Esophagus muscularis mucosa (tissue), 4 donors: ENCODE measurements at regions of chr22 and their contacts with region 1.

Region 1: GRCh38 chr22:37566903-37567820 is 6.9 kb downstream of the CDC42EP1 start:
- DNase-seq: peak; percentile 96
- H3K4me3 ChIP-seq: no peak overlapping the region
- H3K27ac ChIP-seq: peak overlapping the region; percentile 15 to 64 (median 53)
- H3K4me1 ChIP-seq: peaks cover 57 to 81% (median 69%) of the 10 kb centered on the region in 4 donors
- H3K27me3 ChIP-seq: peaks cover 0 to 23% (median 0%) of the 10 kb centered on the region in 4 donors
- CTCF ChIP-seq: peak; percentile 91 to 98 (median 94)
- EP300 ChIP-seq: no peak
- POLR2A ChIP-seq: no peak

Region 2: DNA sequence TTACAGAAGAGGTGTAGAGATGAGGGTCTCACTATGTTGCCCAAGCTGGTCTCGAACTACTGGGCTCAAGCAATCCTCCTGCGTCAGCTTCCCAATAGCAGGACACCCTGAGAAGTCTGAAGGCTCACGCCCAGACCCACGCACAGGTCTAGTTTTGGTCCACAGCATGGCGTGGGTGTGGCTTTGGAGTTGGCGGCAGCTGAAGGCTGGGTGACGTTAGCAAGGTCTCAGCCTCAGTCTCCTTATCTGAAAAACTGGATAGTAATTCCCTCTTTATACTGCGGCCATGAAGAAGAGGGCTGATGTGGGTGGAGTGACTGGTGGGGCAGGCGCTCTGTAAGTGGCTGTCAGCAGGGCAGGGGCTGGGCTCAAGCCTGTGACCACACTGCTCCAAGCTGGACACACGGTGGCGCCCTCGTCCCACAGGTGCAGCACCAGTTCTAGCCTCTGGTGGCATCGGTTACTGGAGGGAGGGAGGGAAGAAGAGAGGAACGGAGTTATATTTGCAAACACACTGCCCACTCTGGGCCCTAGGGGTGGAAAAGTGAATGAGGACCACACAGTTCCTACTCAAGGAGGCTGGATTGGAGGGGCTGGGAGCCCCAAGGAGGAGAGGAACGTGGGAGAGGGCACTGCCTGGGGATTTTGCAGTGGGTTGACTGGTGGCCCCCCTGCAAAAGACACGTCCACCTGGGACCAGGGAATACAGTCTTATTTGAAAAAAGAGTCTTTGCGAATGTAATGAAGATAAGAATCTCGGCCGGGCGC is 28.4 kb before region 1 on chr22:
- intact Hi-C with region 1: loop called (anchors 1 kb)
- DNase-seq: peak; percentile 95
- H3K4me3 ChIP-seq: peak overlapping the region in 1 of 4 donors; percentile 8
- H3K27ac ChIP-seq: no peak overlapping the region
- H3K4me1 ChIP-seq: peaks cover 7 to 12% (median 10%) of the 10 kb centered on the region in 4 donors
- H3K27me3 ChIP-seq: peaks cover 0 to 20% (median 0%) of the 10 kb centered on the region in 4 donors
- CTCF ChIP-seq: peak; percentile 82 to 95 (median 92)
- EP300 ChIP-seq: no peak
- POLR2A ChIP-seq: no peak